HCT116 (cell line): ENCODE measurements at regions of chr9 and their contacts with region 1.

Region 1: DNA sequence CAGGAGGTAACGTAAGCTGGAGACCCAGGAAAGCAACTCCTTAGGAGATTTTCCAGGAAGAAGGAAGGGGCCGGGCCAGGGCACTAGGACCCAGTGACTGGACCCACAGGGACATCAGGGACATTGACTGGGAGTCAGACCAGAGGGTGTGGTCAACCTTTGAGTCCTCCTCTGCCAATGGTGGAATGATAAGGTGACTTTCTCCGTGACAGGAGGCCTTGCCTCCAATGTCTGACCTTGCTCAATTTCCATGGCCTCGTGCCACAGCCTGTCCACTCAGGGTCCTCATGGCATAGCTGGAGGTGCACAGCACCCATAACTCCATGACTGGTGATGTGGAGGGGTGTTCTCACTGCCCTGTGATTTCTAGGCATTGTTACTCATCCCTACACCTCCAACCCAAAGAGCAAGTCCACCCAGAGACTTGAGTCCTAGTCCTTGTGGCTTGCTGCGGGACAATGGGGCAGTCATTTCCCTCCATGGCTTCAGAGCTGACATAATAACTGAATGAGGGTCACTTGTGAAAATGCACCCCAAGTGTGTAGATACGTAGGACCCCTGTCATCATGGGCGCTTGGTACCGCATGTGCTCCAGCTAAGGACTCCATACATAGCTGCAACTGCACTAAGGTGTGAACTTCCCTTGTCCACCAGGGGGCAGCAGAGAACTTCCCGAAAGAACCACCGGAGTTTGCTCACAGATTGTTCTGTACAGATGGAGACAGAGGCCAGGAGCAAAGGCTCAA is 4.1 kb upstream of the AMBP start:
- DNase-seq: peak; percentile 70
- ATAC-seq: peak; percentile 97
- H3K4me3 ChIP-seq: no peak overlapping the region
- H3K27ac ChIP-seq: no peak overlapping the region
- H3K4me1 ChIP-seq: no peaks in the 10 kb centered on the region
- H3K27me3 ChIP-seq: no peaks in the 10 kb centered on the region
- CTCF ChIP-seq: peak; percentile 86 to 91 (median 87)
- POLR2A ChIP-seq: no peak
- RAD21 ChIP-seq: peak; percentile 91

Region 2: DNA sequence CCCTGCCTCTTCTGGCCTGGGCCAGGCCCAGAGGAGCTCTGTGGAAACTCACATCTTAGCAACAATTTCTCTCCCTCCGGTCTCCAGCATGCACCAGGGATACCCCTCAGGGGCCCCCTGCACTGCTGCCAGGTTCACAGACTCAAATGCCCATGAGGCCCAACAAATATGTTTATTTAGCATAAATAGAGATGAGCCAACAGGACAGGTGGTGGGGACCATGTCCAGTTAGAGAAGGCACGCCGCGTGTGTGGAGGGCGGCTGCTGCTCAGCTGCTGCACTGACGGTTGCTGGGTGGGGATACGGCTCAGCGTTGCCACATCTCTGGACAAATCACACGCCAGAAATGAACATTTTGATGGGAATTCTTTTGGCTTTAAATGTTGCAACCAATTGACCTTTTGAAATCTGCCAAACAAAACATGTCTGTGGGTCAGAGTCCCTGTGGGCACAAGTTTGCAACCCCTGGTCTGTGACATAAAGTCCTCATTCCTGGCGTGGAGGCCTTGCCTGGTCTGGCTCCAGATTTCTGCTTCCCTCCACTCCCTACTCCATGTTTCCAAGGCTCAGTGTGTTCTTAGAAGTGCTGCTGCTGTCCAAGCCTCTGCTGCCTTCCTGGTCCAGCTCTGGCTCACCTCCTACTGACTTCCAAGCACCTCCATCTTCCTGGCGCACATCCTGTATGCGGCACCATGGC is 93.0 kb before region 1 on chr9:
- CTCF ChIA-PET with region 1: no interaction called
- POLR2A ChIA-PET with region 1: no interaction called
- RAD21 ChIA-PET with region 1: no interaction called
- intact Hi-C with region 1: no loop called
- DNase-seq: no peak
- ATAC-seq: no peak
- H3K4me3 ChIP-seq: no peak overlapping the region
- H3K27ac ChIP-seq: no peak overlapping the region
- H3K4me1 ChIP-seq: peaks cover 0 to 4% of the 10 kb centered on the region in 2 experiments; a peak in 1 of 4 replicates
- H3K27me3 ChIP-seq: no peaks in the 10 kb centered on the region
- CTCF ChIP-seq: no peak
- POLR2A ChIP-seq: no peak
- RAD21 ChIP-seq: no peak

Region 3: GRCh38 chr9:114096041-114096511 is 13.9 kb after region 1 on chr9:
- CTCF ChIA-PET with region 1: interaction called, 17 read pairs
- POLR2A ChIA-PET with region 1: no interaction called
- RAD21 ChIA-PET with region 1: interaction called in 1 of 2 experiments, 7 read pairs
- intact Hi-C with region 1: no loop called
- DNase-seq: no peak
- ATAC-seq: no peak
- H3K4me3 ChIP-seq: no peak overlapping the region
- H3K27ac ChIP-seq: no peak overlapping the region
- H3K4me1 ChIP-seq: peaks cover 0 to 9% of the 10 kb centered on the region in 2 experiments; a peak in 2 of 4 replicates
- H3K27me3 ChIP-seq: no peaks in the 10 kb centered on the region
- CTCF ChIP-seq: peak in 2 of 3 experiments; percentile 40 to 42; a peak in 3 of 6 replicates
- POLR2A ChIP-seq: no peak
- RAD21 ChIP-seq: no peak

Region 4: DNA sequence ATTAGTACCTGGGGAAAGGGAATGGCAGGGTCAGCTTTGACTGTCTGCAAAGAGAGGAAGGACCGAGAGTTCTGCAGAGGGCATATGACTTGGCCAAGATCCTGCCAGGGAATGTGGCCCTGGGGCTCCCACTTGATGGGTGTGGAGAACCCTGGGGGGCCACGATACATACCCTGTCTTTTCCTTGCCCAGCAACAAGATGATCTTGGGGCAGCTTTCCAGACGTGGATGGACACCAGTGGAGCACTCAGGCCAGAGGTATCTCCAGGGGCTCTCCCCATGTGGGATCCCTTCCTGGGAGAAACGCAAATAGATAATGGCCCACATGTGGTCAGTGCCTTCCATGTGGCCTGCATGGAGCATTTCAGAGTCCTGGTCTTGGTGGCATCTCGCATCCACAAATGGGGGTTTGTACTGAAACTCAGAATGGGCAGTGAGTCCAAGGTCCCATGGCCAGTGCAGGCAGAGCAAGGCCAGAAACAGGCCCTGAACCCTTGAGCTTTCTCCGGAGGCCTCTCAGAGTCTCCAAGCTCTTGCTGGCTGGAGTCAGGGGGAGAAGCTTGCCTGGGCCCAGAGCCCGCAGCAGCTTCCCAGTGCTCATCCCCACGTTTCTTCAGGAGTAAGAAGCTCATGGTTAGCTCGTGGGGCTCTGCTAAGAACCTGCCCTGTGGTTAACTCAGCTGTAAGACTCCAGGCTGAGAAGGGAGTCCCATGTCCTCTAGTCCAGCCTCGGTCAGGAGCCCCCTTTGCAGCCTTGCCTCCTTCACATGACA is 222.4 kb after region 1 on chr9:
- CTCF ChIA-PET with region 1: interaction called, 6 read pairs
- POLR2A ChIA-PET with region 1: no interaction called
- RAD21 ChIA-PET with region 1: no interaction called
- intact Hi-C with region 1: loop called (anchors 1 kb)
- DNase-seq: no peak
- ATAC-seq: no peak
- H3K4me3 ChIP-seq: no peak overlapping the region
- H3K27ac ChIP-seq: no peak overlapping the region
- H3K4me1 ChIP-seq: peaks cover 0 to 3% of the 10 kb centered on the region in 2 experiments; a peak in 1 of 4 replicates
- H3K27me3 ChIP-seq: no peaks in the 10 kb centered on the region
- CTCF ChIP-seq: no peak
- POLR2A ChIP-seq: no peak
- RAD21 ChIP-seq: no peak